ENCODE measurements at regions of chr3 and their contacts with region 1.

Region 1: GRCh38 chr3:196528639-196529233 is 13.6 kb upstream of the SMCO1 start:
- DNase-seq: peak in 6 of 10 donors; percentile 34 to 85 (median 47)
- H3K4me3 ChIP-seq: peak overlapping the region in 58 of 59 donors; percentile 2 to 71 (median 49)
- H3K27ac ChIP-seq: peak overlapping the region in 8 of 59 donors; percentile 9 to 71 (median 50)
- H3K27me3 ChIP-seq: peaks cover 0 to 10% (median 0%) of the 10 kb centered on the region in 45 donors
- CTCF ChIP-seq: peak; percentile 6 to 93 (median 60)

Region 2: DNA sequence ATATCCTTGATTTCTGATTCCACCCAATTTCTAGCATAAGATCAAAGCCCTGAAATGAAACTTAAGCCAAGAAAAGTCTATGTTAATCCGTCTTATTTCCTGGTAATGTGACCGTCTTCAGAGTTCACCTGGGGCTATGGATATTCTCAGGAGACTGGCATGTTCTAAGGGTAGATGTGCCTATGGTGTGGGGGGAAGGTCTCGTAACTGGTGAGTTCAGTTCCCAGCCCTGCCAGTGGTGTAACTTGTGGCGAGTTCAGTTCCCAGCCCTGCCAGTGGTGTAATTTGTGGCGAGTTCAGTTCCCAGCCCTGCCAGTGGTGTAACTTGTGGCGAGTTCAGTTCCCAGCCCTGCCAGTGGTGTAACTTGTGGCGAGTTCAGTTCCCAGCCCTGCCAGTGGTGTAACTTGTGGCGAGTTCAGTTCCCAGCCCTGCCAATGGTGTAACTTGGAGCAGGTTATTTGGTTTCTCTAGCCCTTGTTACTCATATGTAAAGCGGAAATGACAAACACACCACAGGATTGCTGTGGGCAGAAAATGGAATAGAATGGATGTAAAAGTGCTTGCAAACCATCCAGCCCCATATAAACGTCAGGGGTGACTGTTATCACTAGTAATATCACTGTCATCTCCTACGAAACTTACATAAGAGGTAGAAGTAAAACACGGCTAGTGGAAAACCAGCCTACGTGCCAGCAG is 282.0 kb before region 1 on chr3:
- intact Hi-C with region 1: loop called (anchors 10 kb)
- DNase-seq: no peak
- H3K4me3 ChIP-seq: no peak overlapping the region
- H3K27ac ChIP-seq: no peak overlapping the region
- H3K27me3 ChIP-seq: no peaks in the 10 kb centered on the region
- CTCF ChIP-seq: no peak